B cell (primary cell): ENCODE measurements at regions of chr22 and their contacts with region 1.

Region 1: GRCh38 chr22:17830043-17830961 is 56.0 kb upstream of the BID start:
- DNase-seq: peak; percentile 84
- ATAC-seq: peak; percentile 94
- H3K4me3 ChIP-seq: no peak overlapping the region
- H3K4me3 Mint-ChIP-seq: no peak overlapping the region
- H3K27ac ChIP-seq: peak overlapping the region in 1 of 2 donors; percentile 3
- H3K27ac Mint-ChIP-seq: peak overlapping the region; percentile 61
- H3K4me1 ChIP-seq: peaks cover 0 to 7% of the 10 kb centered on the region in 2 donors
- H3K4me1 Mint-ChIP-seq: peaks cover 6% of the 10 kb centered on the region
- H3K27me3 ChIP-seq: no peaks in the 10 kb centered on the region
- H3K27me3 Mint-ChIP-seq: no peaks in the 10 kb centered on the region
- CTCF ChIP-seq: peak; percentile 99

Region 2: DNA sequence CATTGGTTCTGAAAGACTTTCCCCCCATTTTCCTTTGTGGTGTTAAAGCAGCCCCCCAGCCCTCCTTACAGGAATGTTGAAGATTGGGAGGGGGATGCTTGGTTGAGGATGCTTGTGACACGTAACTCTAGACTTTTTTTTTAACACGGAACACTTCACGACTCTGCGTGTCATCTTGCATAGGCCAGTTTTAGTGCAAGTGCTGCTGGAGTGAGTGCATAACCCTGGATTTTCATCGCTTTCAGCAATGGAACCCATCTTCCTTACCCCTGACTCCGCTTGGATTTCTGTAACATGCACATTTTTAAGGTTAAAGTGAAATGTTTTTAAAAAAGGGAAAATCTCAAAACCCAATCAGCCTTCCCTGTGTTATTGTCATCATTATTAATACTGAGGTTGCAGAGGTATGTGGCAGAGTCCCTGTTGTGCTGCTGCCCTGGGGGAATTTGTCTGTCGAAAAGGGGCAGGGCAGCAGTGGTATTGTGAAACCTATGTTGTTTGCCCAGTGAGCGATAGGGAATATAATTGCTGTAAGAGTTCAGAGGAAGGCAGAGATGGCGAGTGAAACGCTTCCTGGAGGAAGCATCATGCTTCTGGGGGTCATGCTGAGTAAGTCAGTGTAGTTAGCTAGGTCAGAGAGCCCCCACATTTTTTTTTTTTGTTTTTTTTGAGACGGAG is 448.9 kb before region 1 on chr22:
- CTCF ChIA-PET with region 1: no interaction called
- POLR2A ChIA-PET with region 1: no interaction called
- intact Hi-C with region 1: no loop called
- DNase-seq: no peak
- ATAC-seq: no peak
- H3K4me3 ChIP-seq: no peak overlapping the region
- H3K4me3 Mint-ChIP-seq: no peak overlapping the region
- H3K27ac ChIP-seq: no peak overlapping the region
- H3K27ac Mint-ChIP-seq: no peak overlapping the region
- H3K4me1 ChIP-seq: no peaks in the 10 kb centered on the region
- H3K4me1 Mint-ChIP-seq: no peaks in the 10 kb centered on the region
- H3K27me3 ChIP-seq: peaks cover 0 to 4% (median 0%) of the 10 kb centered on the region in 4 experiments
- H3K27me3 Mint-ChIP-seq: peaks cover 17% of the 10 kb centered on the region
- CTCF ChIP-seq: no peak

Region 3: DNA sequence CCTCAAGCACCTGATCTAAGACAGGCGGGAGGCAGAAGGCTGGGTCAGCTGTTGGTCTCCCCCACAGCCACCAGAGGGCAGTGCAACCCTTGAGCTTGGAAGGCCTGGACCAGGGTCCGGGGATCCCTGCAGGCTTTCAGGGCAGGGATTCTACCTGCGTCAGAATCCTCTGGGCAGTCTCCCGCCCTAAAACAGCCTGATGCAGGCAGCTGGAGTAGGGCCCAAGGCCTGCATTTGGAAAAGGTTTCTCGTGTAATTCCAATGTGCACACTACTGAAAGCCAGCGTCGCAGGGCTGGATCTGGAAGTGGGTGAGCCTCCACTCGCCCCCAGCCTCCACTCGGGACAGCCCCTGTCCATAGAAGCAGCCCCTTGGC is 87.8 kb before region 1 on chr22:
- CTCF ChIA-PET with region 1: interaction called, 25 read pairs
- POLR2A ChIA-PET with region 1: no interaction called
- intact Hi-C with region 1: no loop called
- DNase-seq: peak; percentile 85
- ATAC-seq: peak; percentile 94
- H3K4me3 ChIP-seq: no peak overlapping the region
- H3K4me3 Mint-ChIP-seq: no peak overlapping the region
- H3K27ac ChIP-seq: no peak overlapping the region
- H3K27ac Mint-ChIP-seq: peak overlapping the region; percentile 26
- H3K4me1 ChIP-seq: peaks cover 0 to 6% of the 10 kb centered on the region in 2 donors
- H3K4me1 Mint-ChIP-seq: peaks cover 8% of the 10 kb centered on the region
- H3K27me3 ChIP-seq: no peaks in the 10 kb centered on the region
- H3K27me3 Mint-ChIP-seq: no peaks in the 10 kb centered on the region
- CTCF ChIP-seq: peak; percentile 75

Region 4: DNA sequence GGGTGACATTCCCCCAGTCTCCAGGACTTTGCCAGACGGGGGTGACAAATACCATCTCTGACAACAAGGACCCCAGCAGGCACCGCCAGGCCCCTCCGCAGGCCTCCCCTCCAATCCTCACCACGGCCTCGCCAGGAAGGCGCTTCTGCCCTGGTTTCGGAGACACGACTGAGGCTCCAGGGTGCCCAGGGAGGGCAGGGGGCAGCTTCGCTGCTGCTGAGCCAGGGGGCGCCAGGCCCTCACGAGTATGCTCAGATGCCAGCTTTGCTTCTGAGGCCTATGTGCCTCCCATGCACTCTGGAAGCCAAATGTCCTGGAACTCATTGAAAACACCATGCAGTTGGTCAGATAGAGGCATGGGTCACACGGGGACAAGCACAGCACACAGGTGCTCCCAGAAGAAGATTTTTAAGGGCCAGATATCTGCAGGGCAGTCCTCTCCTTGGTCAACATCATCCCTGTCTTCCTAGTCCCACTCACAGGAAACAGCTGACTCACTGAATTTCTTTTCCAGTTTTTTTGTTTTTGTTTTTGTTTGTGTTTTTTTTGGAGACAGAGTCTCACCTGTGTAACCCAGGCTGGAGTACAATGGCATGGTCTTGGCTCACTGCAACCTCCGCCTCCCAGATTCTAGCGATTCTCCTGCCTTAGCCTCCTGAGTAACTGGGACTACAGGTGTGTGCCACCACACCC is 75.9 kb before region 1 on chr22:
- CTCF ChIA-PET with region 1: interaction called, 10 read pairs
- POLR2A ChIA-PET with region 1: no interaction called
- intact Hi-C with region 1: no loop called
- DNase-seq: peak; percentile 42
- ATAC-seq: peak; percentile 43
- H3K4me3 ChIP-seq: no peak overlapping the region
- H3K4me3 Mint-ChIP-seq: no peak overlapping the region
- H3K27ac ChIP-seq: no peak overlapping the region
- H3K27ac Mint-ChIP-seq: no peak overlapping the region
- H3K4me1 ChIP-seq: no peaks in the 10 kb centered on the region
- H3K4me1 Mint-ChIP-seq: no peaks in the 10 kb centered on the region
- H3K27me3 ChIP-seq: no peaks in the 10 kb centered on the region
- H3K27me3 Mint-ChIP-seq: no peaks in the 10 kb centered on the region
- CTCF ChIP-seq: peak; percentile 35

Region 5: GRCh38 chr22:17867160-17867785 is 37.0 kb after region 1 on chr22:
- CTCF ChIA-PET with region 1: no interaction called
- POLR2A ChIA-PET with region 1: no interaction called
- intact Hi-C with region 1: no loop called
- DNase-seq: no peak
- ATAC-seq: no peak
- H3K4me3 ChIP-seq: no peak overlapping the region
- H3K4me3 Mint-ChIP-seq: no peak overlapping the region
- H3K27ac ChIP-seq: no peak overlapping the region
- H3K27ac Mint-ChIP-seq: peak overlapping the region; percentile 60
- H3K4me1 ChIP-seq: no peaks in the 10 kb centered on the region
- H3K4me1 Mint-ChIP-seq: no peaks in the 10 kb centered on the region
- H3K27me3 ChIP-seq: no peaks in the 10 kb centered on the region
- H3K27me3 Mint-ChIP-seq: no peaks in the 10 kb centered on the region
- CTCF ChIP-seq: no peak

Region 6: DNA sequence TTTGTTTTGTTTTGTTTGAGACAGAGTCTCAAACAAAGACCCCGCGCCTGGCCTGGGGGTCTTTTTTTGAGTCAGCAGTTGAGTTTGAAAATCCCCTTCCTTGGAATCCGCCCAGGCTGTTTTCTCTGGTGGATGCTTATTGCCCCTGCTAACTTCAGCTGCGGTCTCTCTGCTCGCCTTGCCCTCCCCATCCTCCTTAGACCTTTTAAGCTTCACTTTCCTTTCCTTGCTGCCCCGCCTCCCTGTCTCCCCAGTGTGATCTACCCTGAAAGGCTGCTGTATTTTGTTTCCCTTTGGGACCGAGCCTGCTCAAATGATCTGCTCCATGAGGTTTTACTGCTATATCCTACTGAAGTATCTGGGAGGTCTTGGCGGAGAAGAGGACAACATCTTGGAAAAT is 322.2 kb after region 1 on chr22:
- CTCF ChIA-PET with region 1: no interaction called
- POLR2A ChIA-PET with region 1: no interaction called
- intact Hi-C with region 1: loop called (anchors 1 kb)
- DNase-seq: no peak
- ATAC-seq: no peak
- H3K4me3 ChIP-seq: no peak overlapping the region
- H3K4me3 Mint-ChIP-seq: peak overlapping the region; percentile 35
- H3K27ac ChIP-seq: no peak overlapping the region
- H3K27ac Mint-ChIP-seq: no peak overlapping the region
- H3K4me1 ChIP-seq: peaks cover 6 to 14% of the 10 kb centered on the region in 2 donors
- H3K4me1 Mint-ChIP-seq: peaks cover 16% of the 10 kb centered on the region
- H3K27me3 ChIP-seq: no peaks in the 10 kb centered on the region
- H3K27me3 Mint-ChIP-seq: no peaks in the 10 kb centered on the region
- CTCF ChIP-seq: no peak